ENCODE measurements at regions of chr1 and their contacts with region 1.

Region 1: GRCh38 chr1:54273092-54273794 is 73.3 kb downstream of the MRPL37 start:
- DNase-seq: peak; percentile 43 to 90 (median 79)

Region 2: GRCh38 chr1:54016313-54017262 is 256.7 kb before region 1 on chr1:
- intact Hi-C with region 1: no loop called
- DNase-seq: peak in 5 of 42 donors; percentile 3 to 28 (median 6)

Region 3: DNA sequence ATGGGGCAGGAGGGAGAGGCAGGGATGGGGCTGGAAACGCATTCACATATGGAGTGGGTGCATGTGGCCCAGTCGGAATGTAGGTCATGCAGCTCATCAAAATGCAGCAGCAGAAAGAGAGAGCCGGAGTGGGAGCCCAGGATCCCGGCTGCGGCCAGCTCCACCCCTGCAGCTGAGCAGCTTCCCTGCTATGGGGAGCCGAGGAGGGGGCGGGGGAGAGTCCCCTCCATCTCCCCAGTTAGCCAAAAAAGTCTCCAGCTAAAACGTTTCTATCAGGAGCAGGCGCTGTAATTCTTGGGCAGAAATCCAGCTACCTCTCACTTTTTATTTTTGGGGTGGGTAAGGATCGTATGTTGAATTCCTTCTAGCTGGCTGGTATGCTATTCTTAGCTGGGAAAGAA is 33.6 kb before region 1 on chr1:
- intact Hi-C with region 1: no loop called
- DNase-seq: peak in 38 of 42 donors; percentile 16 to 78 (median 54)

Region 4: DNA sequence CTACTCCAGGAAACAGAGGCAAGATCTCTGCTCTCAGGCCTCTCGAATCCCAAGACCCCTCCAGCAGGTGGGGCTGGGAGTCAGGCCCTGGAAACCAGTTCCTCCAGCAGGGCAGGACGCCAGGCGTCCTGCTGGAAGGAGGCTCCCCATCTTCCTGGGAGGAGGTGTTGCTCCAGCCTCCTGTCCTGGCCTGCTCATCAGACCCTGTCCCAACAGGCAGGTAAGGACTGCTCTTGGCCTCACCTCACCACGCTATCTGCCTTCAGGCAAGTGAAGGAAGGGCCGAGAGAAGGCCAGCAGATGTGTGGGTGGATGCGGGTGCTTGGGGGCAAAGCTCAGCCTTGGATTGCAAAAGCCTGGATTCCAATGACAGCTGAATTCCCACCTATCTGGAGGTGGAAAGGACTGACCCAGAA is 50.1 kb after region 1 on chr1:
- intact Hi-C with region 1: loop called (anchors 10 kb)
- DNase-seq: no peak